PC-3 (cell line): ENCODE measurements at regions of chr3 and their contacts with region 1.

Region 1: DNA sequence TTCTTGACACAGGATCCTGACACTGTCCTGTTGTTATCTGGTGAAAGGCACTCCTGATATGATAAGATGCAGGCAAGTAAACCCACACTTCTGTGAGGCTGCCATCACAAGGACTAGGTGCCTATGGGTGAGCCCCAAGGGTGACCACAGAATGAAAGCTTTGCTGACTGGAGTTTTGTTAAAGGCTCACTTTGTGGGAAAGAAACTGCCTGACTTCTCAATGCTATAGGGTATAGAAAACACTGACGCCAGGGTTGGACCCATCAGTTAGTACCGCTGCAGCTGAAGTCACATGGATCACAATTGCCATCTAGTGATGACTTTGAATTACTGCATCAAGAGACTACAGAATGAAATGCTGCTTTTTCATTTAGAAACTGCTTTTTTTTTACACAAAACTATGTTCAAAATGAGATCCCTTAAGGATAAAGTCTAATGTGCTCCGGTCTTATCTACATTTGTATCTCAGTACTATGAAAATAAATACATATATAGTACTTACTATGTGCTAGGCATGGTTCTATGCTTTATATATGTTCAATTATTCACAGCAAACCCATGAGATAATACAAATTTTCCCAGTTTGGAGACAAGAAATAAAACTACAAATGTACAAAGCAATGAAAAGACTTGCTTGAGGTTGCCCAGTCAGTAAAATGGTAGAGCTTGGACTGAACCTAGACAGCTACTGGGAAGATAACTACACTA is 64.2 kb upstream of the CMSS1 start:
- DNase-seq: peak; percentile 82
- ATAC-seq: peak; percentile 81
- H3K4me3 ChIP-seq: no peak overlapping the region
- H3K27ac ChIP-seq: no peak overlapping the region
- H3K4me1 ChIP-seq: peaks cover 25% of the 10 kb centered on the region
- H3K27me3 ChIP-seq: no peaks in the 10 kb centered on the region
- CTCF ChIP-seq: peak; percentile 95

Region 2: DNA sequence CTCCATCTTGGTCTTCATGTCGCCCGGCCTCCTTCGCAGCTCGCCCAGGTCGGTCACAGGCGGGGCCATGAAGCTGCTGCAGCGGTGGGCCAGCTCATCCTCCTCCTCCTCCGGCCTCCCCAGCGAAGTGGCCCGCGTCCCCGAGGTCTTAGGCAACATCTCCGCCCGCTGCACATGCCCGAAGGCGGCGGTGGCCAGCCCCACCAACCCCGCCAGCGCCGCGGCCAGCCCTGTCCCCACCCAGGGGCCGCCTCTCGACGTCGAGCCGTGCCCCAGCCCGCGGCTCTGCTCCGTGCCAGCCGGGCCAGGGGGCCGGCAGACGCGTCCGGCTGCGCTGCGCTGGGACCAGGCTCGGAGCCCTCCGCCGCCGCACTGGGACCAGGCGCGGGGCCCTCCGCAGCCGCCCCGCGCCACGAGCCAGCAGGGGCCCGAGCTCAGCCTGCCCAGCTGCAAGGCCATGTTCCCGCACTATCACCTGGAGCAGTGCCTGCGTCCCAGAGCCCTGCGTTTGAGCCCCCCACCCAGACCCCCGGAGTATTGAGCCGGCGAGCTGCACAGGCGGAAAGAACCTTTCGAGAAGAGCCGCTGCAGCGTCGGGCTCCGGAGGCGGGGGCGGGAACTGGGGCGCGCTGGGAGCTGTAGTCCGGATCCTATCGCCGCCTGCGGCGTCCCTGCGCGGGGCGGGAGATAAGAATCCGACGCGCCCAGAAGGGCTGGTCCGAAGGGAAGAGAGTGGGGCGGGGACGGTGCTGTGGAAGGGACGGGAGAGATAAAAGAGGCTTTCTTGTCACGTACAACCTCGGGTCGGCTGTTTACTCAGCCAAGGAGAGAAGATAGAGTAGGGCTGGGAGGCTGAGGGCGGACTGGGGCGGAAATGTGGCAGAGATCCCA is 1160.1 kb before region 1 on chr3 and contains the start of gene CPOX:
- CTCF ChIA-PET with region 1: no interaction called
- POLR2A ChIA-PET with region 1: no interaction called
- intact Hi-C with region 1: loop called (anchors 10 kb)
- DNase-seq: peak; percentile 96
- ATAC-seq: peak; percentile 97
- H3K4me3 ChIP-seq: peak within 1 kb of the TSS; percentile 97
- H3K27ac ChIP-seq: peak within 1 kb of the TSS; percentile 15
- H3K4me1 ChIP-seq: peaks cover 12% of the 10 kb centered on the region
- H3K27me3 ChIP-seq: no peaks in the 10 kb centered on the region
- CTCF ChIP-seq: no peak
- total RNA-seq, gene CPOX: 62.0 and 86.2 TPM in 2 replicates

Region 3: GRCh38 chr3:98994128-98994762 is 759.2 kb before region 1 on chr3:
- CTCF ChIA-PET with region 1: no interaction called
- POLR2A ChIA-PET with region 1: no interaction called
- intact Hi-C with region 1: loop called (anchors 1 kb)
- DNase-seq: peak; percentile 84
- ATAC-seq: peak; percentile 70
- H3K4me3 ChIP-seq: no peak overlapping the region
- H3K27ac ChIP-seq: peak overlapping the region; percentile 7; the same call in 1 of the 2 replicates
- H3K4me1 ChIP-seq: peaks cover 7% of the 10 kb centered on the region; the same call in 1 of the 2 replicates
- H3K27me3 ChIP-seq: no peaks in the 10 kb centered on the region
- CTCF ChIP-seq: peak; percentile 93

Region 4: GRCh38 chr3:99114565-99115291 is 638.7 kb before region 1 on chr3:
- CTCF ChIA-PET with region 1: no interaction called
- POLR2A ChIA-PET with region 1: no interaction called
- intact Hi-C with region 1: loop called (anchors 1 kb)
- DNase-seq: peak; percentile 72
- ATAC-seq: peak; percentile 90
- H3K4me3 ChIP-seq: no peak overlapping the region
- H3K27ac ChIP-seq: no peak overlapping the region
- H3K4me1 ChIP-seq: peaks cover 6% of the 10 kb centered on the region; the same call in 1 of the 2 replicates
- H3K27me3 ChIP-seq: no peaks in the 10 kb centered on the region
- CTCF ChIP-seq: peak; percentile 94

Region 5: DNA sequence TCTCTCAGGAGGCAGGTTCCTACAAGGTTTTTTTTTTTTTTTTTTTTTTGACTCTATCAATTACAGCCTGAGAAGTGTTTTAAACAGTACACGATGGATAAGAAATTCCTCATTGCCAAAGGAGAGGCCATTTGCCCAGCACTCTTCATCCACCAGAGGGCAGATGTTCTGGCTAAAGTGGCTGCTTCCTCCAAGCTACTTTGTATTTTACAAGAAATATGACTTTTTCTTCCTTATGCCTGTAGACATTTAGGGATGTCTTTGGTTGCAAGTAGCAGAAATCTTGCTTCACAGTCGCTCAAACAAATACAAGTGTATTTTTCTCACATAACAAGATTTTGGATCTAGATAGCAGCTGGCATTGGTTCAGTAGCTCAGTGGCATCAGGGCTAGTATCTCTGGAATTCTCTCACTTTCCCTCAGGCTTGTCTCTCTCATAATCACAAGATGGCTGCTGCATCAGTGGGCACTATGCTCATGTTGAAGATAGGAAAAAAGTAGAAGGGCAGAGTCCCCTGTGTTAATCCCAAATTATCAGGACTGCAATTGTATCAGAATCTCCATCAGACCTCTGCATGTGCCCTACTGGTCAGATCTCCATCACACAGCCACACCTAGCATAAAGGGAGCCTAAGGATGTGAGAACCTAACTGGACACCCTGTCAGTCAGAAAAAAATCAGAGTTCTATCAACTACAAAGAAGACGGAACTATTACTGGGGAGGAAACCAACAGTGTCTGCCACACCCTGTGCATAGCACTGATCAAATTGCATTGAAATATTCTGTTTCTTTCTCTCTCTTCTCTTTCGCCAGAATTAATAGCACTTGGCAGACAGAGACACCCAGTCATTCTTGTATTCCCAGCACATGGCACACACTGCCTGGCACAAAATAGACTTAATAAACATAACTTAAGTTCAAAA is 253.9 kb before region 1 on chr3:
- CTCF ChIA-PET with region 1: interaction called, 7 read pairs
- POLR2A ChIA-PET with region 1: no interaction called
- intact Hi-C with region 1: loop called (anchors 1 kb)
- DNase-seq: peak; percentile 77
- ATAC-seq: peak; percentile 81
- H3K4me3 ChIP-seq: no peak overlapping the region
- H3K27ac ChIP-seq: no peak overlapping the region
- H3K4me1 ChIP-seq: peaks cover 18% of the 10 kb centered on the region
- H3K27me3 ChIP-seq: no peaks in the 10 kb centered on the region
- CTCF ChIP-seq: peak; percentile 94

Region 6: GRCh38 chr3:99544786-99545281 is 208.6 kb before region 1 on chr3:
- CTCF ChIA-PET with region 1: no interaction called
- POLR2A ChIA-PET with region 1: no interaction called
- intact Hi-C with region 1: loop called (anchors 5 kb)
- DNase-seq: no peak
- ATAC-seq: no peak
- H3K4me3 ChIP-seq: no peak overlapping the region
- H3K27ac ChIP-seq: no peak overlapping the region
- H3K4me1 ChIP-seq: peaks cover 44% of the 10 kb centered on the region
- H3K27me3 ChIP-seq: no peaks in the 10 kb centered on the region
- CTCF ChIP-seq: no peak

Region 7: DNA sequence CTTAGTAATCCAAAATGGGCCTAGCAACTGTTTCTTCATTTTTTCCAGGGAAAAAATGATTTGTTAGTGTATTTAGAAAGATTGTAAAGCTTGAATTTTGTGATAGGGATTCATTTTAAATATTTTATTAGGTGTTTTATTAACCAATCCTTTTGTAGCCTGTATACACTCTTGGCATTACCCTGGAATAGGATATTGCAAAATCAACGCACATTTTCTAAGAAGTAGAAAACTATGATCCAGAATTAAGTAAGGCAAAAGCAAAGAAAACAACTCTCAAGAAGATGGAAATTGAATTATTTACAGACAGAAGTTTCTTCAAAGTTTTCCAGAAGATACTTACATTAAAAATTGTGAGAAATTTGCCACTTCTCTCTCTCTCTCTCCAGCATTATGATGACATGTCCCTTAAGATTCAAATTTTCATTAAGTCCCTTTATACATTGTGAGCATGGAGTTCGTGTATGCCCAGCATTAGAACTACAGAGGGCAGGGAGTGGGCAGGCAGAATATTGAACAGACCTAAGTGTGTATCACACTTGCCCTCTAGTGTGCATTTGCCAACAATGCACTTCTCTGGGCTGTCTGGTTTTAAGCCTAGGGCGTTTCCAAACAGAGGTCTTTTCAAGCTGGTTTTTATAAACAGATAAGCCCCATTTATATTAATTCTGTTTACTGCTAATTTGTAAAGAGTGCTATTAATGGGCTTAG is 35.7 kb after region 1 on chr3:
- CTCF ChIA-PET with region 1: no interaction called
- POLR2A ChIA-PET with region 1: no interaction called
- intact Hi-C with region 1: loop called (anchors 1 kb)
- DNase-seq: peak; percentile 84
- ATAC-seq: peak; percentile 100
- H3K4me3 ChIP-seq: no peak overlapping the region
- H3K27ac ChIP-seq: no peak overlapping the region
- H3K4me1 ChIP-seq: peaks cover 4% of the 10 kb centered on the region; the same call in 1 of the 2 replicates
- H3K27me3 ChIP-seq: no peaks in the 10 kb centered on the region
- CTCF ChIP-seq: peak; percentile 94